ENCODE measurements at regions of chr1 and their contacts with region 1.

Region 1: GRCh38 chr1:163069142-163069541 is at the start of gene RGS4:
- DNase-seq: peak; percentile 31 to 88
- H3K4me3 ChIP-seq: peak within 1 kb of the TSS; percentile 32 to 41 (median 40)
- H3K27ac ChIP-seq: peak within 1 kb of the TSS in 4 of 5 donors; percentile 1 to 58 (median 40)
- H3K4me1 ChIP-seq: peaks cover 0 to 25% (median 15%) of the 10 kb centered on the region in 4 donors
- H3K27me3 ChIP-seq: no peaks in the 10 kb centered on the region
- CTCF ChIP-seq: peak in 2 of 7 experiments; percentile 19 to 25
- EP300 ChIP-seq: no peak
- POLR2A ChIP-seq: no peak
- total RNA-seq, gene RGS4: 2.0 to 60.7 (median 24.6) TPM in 3 of 5 donors, not detected in the others

Region 2: GRCh38 chr1:162882248-162882674 is 186.9 kb before region 1 on chr1:
- intact Hi-C with region 1: loop called (anchors 10 kb)
- DNase-seq: peak in 1 of 2 donors; percentile 30
- H3K4me3 ChIP-seq: no peak overlapping the region
- H3K27ac ChIP-seq: no peak overlapping the region
- H3K4me1 ChIP-seq: no peaks in the 10 kb centered on the region
- H3K27me3 ChIP-seq: no peaks in the 10 kb centered on the region
- CTCF ChIP-seq: no peak
- EP300 ChIP-seq: no peak
- POLR2A ChIP-seq: no peak

Region 3: GRCh38 chr1:163006051-163006834 is 62.9 kb before region 1 on chr1:
- intact Hi-C with region 1: no loop called
- DNase-seq: no peak
- H3K4me3 ChIP-seq: no peak overlapping the region
- H3K27ac ChIP-seq: no peak overlapping the region
- H3K4me1 ChIP-seq: no peaks in the 10 kb centered on the region
- H3K27me3 ChIP-seq: no peaks in the 10 kb centered on the region
- CTCF ChIP-seq: no peak
- EP300 ChIP-seq: no peak
- POLR2A ChIP-seq: no peak